Activated CD4-positive, alpha-beta T cell treated with anti-CD3 and anti-CD28 coated beads for 36 hours (primary cell): ENCODE measurements at regions of chr19 and their contacts with region 1.

Region 1: DNA sequence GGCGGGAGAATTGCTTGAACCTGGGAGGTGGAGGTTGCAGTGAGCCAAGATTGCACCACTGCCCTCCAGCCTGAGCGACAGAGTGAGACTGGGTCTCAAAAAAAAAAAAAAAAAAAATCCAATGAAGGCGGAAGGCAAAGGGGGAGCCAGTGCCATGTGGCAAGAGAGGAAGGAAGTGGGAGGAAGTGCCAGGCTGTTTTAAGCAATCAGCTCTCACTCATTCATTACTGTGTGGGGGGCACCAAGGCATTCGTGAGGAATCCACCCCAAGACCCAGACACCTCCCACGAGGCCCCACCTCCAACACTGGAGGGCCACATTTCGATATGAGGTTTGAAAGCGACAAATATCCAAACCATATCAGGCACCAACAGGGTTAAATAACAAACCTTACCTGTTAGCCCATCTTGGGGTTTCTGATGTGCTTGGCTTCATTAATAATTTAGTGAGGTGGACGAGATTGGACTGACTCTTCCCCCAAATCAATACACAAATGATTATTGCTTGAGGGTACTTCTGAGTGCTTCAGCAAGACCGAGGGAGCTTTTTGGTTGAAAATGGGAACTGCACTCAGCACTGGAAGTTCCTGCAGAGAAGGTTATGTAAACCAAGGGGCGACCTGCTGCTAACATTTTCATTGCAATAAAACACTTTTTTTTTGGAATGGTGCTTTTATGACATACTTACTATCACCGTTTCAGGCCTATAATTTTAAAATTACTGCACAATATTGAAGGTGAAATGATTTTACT is 7.5 kb upstream of the LRP3 start:
- DNase-seq: no peak
- ATAC-seq: no peak
- H3K4me3 Mint-ChIP-seq: no peak overlapping the region
- H3K27ac Mint-ChIP-seq: no peak overlapping the region
- H3K4me1 Mint-ChIP-seq: peaks cover 7% of the 10 kb centered on the region
- H3K27me3 Mint-ChIP-seq: peaks cover 8% of the 10 kb centered on the region

Region 2: GRCh38 chr19:31706691-31707620 is 1479.7 kb before region 1 on chr19:
- CTCF ChIA-PET with region 1: no interaction called
- POLR2A ChIA-PET with region 1: no interaction called
- intact Hi-C with region 1: no loop called
- DNase-seq: no peak
- ATAC-seq: no peak
- H3K4me3 Mint-ChIP-seq: no peak overlapping the region
- H3K27ac Mint-ChIP-seq: no peak overlapping the region
- H3K4me1 Mint-ChIP-seq: no peaks in the 10 kb centered on the region
- H3K27me3 Mint-ChIP-seq: peaks cover 2% of the 10 kb centered on the region

Region 3: DNA sequence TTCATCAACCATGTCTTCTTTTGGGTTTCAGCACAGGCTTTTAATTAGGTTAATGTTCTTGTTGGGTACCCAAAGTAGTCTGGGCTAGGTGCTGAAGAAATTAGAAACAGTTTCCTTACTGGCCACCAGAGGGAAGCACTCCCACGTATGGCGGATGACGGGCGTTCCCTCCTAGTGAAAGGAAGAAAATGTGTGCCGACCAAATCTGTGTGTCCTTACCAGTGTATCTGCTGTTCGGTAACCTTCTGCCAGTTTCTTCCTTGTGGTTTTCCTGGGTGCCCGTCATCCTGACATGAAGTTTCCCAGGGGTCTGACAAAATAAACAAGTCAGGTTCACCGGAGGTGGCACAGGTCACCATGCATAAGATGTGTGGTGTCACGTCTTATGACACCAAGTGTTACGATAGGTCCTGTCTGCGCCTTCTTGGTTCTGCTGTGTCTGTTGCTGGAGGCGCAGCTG is 60.6 kb before region 1 on chr19:
- CTCF ChIA-PET with region 1: interaction called, 41 read pairs
- POLR2A ChIA-PET with region 1: no interaction called
- intact Hi-C with region 1: loop called (anchors 1 kb)
- DNase-seq: peak; percentile 76
- ATAC-seq: peak; percentile 96
- H3K4me3 Mint-ChIP-seq: no peak overlapping the region
- H3K27ac Mint-ChIP-seq: no peak overlapping the region
- H3K4me1 Mint-ChIP-seq: peaks cover 4% of the 10 kb centered on the region
- H3K27me3 Mint-ChIP-seq: no peaks in the 10 kb centered on the region

Region 4: DNA sequence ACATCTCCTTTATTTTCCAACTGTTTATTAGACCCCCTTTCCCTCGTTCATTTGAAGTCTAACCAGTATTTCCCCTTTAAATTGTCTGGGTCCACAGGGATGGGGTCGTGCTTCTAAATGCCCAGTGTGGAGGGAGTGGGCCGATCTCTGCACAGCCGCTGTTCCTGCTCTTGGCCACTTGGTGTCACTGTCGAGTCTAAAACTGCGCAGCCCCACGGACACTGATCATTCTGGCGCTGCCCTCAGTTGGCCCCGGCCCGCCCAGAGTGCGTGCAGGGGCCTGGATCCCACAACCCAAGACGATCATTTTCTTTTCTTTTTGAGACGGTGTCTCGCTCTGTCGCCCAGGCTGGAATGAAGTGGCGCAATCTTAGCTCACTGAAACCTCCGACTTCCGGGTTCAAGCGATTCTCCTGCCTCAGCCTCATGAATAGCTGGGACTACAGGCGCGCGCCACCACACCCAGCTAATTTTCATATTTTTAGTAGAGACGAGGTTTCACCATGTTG is 42.7 kb before region 1 on chr19:
- CTCF ChIA-PET with region 1: interaction called, 13 read pairs
- POLR2A ChIA-PET with region 1: no interaction called
- intact Hi-C with region 1: loop called (anchors 1 kb)
- DNase-seq: peak; percentile 80
- ATAC-seq: peak; percentile 99
- H3K4me3 Mint-ChIP-seq: peak overlapping the region; percentile 1
- H3K27ac Mint-ChIP-seq: no peak overlapping the region
- H3K4me1 Mint-ChIP-seq: peaks cover 4% of the 10 kb centered on the region
- H3K27me3 Mint-ChIP-seq: no peaks in the 10 kb centered on the region

Region 5: DNA sequence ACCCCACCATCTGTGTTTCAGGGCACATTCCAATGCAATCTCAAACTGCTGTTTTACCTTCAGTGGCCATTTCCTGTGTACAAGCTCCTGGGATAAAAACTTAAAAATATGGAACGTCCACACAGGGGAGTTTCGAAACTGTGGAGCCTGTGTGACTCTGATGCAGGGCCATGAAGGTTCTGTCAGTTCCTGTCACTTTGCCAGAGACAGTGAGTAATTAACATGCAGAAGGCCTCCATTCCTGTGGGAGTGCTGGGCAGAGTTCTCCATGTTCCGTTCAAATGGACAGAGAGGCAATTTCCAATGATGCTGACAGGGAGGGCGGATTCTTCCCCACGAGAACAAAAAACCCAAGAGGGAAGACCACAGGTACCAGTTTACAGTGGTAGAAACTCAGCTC is 30.3 kb before region 1 on chr19:
- CTCF ChIA-PET with region 1: interaction called, 31 read pairs
- POLR2A ChIA-PET with region 1: no interaction called
- intact Hi-C with region 1: no loop called
- DNase-seq: no peak
- ATAC-seq: no peak
- H3K4me3 Mint-ChIP-seq: no peak overlapping the region
- H3K27ac Mint-ChIP-seq: no peak overlapping the region
- H3K4me1 Mint-ChIP-seq: peaks cover 28% of the 10 kb centered on the region
- H3K27me3 Mint-ChIP-seq: no peaks in the 10 kb centered on the region